Ovary (tissue), 10 donors: ENCODE measurements at regions of chr6 and their contacts with region 1.

Region 1: DNA sequence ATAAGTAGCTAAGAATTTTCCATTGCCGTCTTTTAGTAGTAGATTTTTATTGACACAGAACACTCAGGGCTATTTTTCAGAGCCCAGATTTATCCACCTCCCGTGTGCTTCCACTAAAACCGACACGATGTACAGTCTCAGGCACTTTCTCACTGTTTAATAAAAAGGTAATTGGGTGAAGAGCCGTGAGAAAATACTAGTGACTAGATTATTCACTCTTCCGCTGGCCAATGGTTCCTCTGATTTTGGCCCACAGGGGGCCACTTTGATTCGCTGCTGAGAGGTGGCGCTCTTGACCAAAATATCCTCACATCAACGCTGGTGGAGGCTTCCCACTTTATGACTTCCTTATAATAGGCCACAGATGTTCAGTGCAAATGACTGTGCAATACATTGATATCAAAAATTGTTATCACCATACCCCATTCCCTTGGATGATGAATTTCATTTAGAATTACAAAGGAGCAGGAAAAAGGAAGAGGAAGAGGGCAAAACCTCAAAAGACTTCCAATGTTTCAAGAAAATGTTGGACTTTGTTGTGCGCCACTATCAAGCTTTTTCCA is 12.3 kb upstream of the HDDC2 start:
- DNase-seq: peak; percentile 20 to 67 (median 63)
- H3K4me3 ChIP-seq: no peak overlapping the region
- H3K27ac ChIP-seq: no peak overlapping the region
- H3K4me1 ChIP-seq: no peaks in the 10 kb centered on the region
- H3K27me3 ChIP-seq: no peaks in the 10 kb centered on the region
- CTCF ChIP-seq: peak; percentile 30 to 54 (median 48)
- EP300 ChIP-seq: no peak
- POLR2A ChIP-seq: no peak

Region 2: GRCh38 chr6:125765944-125766343 is 451.8 kb after region 1 on chr6:
- intact Hi-C with region 1: loop called (anchors 5 kb)
- DNase-seq: no peak
- H3K4me3 ChIP-seq: no peak overlapping the region
- H3K27ac ChIP-seq: no peak overlapping the region
- H3K4me1 ChIP-seq: no peaks in the 10 kb centered on the region
- H3K27me3 ChIP-seq: no peaks in the 10 kb centered on the region
- CTCF ChIP-seq: no peak
- EP300 ChIP-seq: no peak
- POLR2A ChIP-seq: no peak